ENCODE measurements at regions of chrX and their contacts with region 1.

Region 1: GRCh38 chrX:45515262-45516215 is 314.9 kb upstream of the DIPK2B start:
- DNase-seq: peak; percentile 58
- H3K4me3 ChIP-seq: no peak overlapping the region
- H3K27ac ChIP-seq: peak overlapping the region in 1 of 2 donors; percentile 45
- H3K4me1 ChIP-seq: no peaks in the 10 kb centered on the region
- H3K27me3 ChIP-seq: no peaks in the 10 kb centered on the region
- CTCF ChIP-seq: peak in 3 of 4 experiments; percentile 18 to 50 (median 46)
- POLR2A ChIP-seq: no peak

Region 2: GRCh38 chrX:45322382-45322781 is 193.2 kb before region 1 on chrX:
- intact Hi-C with region 1: loop called (anchors 10 kb)
- DNase-seq: peak; percentile 41
- H3K4me3 ChIP-seq: no peak overlapping the region
- H3K27ac ChIP-seq: no peak overlapping the region
- H3K4me1 ChIP-seq: no peaks in the 10 kb centered on the region
- H3K27me3 ChIP-seq: no peaks in the 10 kb centered on the region
- CTCF ChIP-seq: peak in 2 of 4 experiments; percentile 37 to 49
- POLR2A ChIP-seq: no peak

Region 3: DNA sequence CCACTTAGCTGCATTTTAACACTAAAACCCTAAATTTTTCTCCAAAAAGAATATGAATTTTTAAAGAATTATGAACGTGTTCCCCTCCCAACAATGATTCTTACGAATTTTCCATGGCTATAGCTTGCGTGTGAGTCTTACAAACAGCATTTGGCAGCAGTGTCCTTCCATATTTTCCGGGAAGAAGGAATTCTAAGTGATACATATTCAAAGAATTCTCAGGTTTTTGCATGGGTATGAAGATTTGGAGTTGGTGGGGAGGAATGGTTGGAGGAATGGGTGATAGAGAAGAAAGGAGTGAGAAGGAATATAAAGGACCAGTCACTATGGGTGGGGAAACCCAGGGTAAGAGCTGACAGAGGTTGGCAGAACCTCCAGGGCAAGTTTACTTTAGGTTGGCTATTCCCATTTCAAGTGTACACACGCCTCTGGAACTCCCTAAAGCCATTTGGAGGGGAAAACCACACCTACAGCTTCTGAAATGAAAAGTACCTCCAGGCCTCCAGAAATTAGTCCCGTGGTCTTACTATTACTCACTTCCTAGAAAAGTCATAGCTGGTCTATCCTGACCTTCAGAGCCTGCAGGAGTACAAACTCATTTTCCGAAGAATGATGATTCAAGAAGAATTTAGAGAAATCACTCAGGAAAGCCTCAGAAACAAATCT is 106.0 kb after region 1 on chrX:
- intact Hi-C with region 1: loop called (anchors 10 kb)
- DNase-seq: no peak
- H3K4me3 ChIP-seq: no peak overlapping the region
- H3K27ac ChIP-seq: no peak overlapping the region
- H3K4me1 ChIP-seq: no peaks in the 10 kb centered on the region
- H3K27me3 ChIP-seq: no peaks in the 10 kb centered on the region
- CTCF ChIP-seq: no peak
- POLR2A ChIP-seq: no peak

Region 4: DNA sequence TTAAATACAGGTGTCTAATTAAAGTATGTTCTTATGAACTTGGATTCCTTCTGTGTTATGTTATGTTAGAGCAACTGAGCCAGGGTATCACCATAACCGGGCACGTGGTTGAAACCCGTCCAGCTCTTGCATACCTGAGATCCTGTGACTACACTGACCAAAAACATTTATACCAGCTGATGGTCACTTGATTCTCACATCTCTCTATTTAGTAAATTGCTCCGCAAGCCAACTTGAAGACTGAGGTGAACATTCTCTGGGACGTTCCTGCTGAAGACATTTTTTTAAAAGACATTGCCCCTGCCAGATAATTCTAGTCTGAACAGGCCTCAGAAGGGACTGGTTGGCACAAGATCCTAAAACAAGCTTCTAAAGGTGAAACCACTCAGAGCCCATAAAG is 235.1 kb after region 1 on chrX:
- intact Hi-C with region 1: loop called (anchors 5 kb)
- DNase-seq: peak; percentile 21
- H3K4me3 ChIP-seq: no peak overlapping the region
- H3K27ac ChIP-seq: no peak overlapping the region
- H3K4me1 ChIP-seq: no peaks in the 10 kb centered on the region
- H3K27me3 ChIP-seq: no peaks in the 10 kb centered on the region
- CTCF ChIP-seq: no peak
- POLR2A ChIP-seq: no peak

Region 5: GRCh38 chrX:45849253-45849862 is 333.8 kb after region 1 on chrX:
- intact Hi-C with region 1: loop called (anchors 10 kb)
- DNase-seq: peak; percentile 15
- H3K4me3 ChIP-seq: no peak overlapping the region
- H3K27ac ChIP-seq: no peak overlapping the region
- H3K4me1 ChIP-seq: no peaks in the 10 kb centered on the region
- H3K27me3 ChIP-seq: no peaks in the 10 kb centered on the region
- CTCF ChIP-seq: peak in 2 of 4 experiments; percentile 24 to 29
- POLR2A ChIP-seq: no peak

Measured in prostate gland (tissue), 2 donors.